Calu3 (cell line): ENCODE measurements at regions of chr2 and their contacts with region 1.

Region 1: DNA sequence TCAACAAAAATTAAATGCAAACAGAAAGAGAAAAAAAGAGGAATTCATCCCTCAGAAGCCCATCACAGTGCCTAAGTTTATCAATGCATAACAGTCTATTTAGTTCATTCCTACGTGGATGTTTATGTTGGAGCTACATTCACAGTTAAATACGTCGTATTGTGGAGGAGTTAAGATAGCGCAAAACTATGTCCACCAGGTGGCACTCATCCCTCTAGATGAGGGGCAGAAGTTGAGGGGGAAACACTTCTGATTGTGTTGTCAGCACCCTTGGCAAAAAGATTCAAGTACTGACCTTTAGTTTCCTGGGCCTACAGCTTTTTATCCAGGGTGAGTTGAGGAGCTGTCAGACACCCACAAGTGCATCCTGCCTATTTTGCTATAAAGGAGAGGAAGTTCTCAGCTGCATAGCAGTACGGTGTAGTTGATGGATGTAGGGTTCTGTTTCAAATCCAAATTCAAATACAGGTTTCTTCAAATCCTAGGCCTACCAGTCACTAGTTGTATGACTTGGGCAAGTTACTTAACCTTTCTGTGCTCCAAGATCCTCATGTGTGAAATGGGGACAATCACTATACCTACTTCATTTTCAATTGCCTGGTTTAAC is 26.8 kb upstream of the MYO1B start:
- DNase-seq: peak; percentile 68
- H3K4me3 Mint-ChIP-seq: no peak overlapping the region
- H3K27ac Mint-ChIP-seq: no peak overlapping the region
- H3K4me1 Mint-ChIP-seq: peaks cover 31% of the 10 kb centered on the region
- H3K27me3 Mint-ChIP-seq: no peaks in the 10 kb centered on the region
- CTCF ChIP-seq: peak; percentile 53

Region 2: GRCh38 chr2:191486584-191487320 is 268.4 kb after region 1 on chr2:
- CTCF ChIA-PET with region 1: no interaction called
- intact Hi-C with region 1: loop called (anchors 5 kb)
- DNase-seq: peak; percentile 32
- H3K4me3 Mint-ChIP-seq: no peak overlapping the region
- H3K27ac Mint-ChIP-seq: no peak overlapping the region
- H3K4me1 Mint-ChIP-seq: peaks cover 20% of the 10 kb centered on the region
- H3K27me3 Mint-ChIP-seq: no peaks in the 10 kb centered on the region
- CTCF ChIP-seq: no peak

Region 3: DNA sequence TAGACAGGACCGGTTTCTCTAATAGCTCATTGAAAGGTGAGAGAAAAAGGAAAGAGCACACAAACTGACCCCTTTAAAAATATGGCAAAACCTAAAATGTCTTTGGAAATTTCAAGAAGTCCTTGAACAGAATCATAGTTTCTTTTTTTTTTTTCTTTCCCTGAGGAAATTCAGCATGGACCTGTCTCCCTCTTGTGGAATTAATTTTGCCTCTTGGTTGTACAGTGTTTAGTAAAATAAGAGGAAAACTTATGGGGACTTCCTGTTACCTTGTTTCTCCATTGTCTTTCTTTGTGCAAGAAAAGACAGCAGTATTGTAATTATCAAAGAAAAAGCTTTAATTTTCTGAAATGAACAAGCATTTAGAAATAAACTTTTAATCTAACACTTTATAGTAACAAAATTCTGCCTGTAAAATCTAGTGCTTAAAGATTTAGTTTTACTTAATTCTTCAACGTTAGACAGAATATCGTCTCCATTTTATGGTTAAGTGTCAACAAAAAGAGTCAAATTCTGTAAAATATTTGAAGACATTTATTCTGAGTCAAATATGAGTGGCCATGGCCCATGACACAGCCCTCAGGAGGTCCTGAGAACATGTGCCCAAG is 283.3 kb after region 1 on chr2:
- CTCF ChIA-PET with region 1: interaction called, 4 read pairs
- intact Hi-C with region 1: loop called (anchors 2 kb)
- DNase-seq: no peak
- H3K4me3 Mint-ChIP-seq: no peak overlapping the region
- H3K27ac Mint-ChIP-seq: no peak overlapping the region
- H3K4me1 Mint-ChIP-seq: peaks cover 2% of the 10 kb centered on the region
- H3K27me3 Mint-ChIP-seq: no peaks in the 10 kb centered on the region
- CTCF ChIP-seq: peak; percentile 41

Region 4: DNA sequence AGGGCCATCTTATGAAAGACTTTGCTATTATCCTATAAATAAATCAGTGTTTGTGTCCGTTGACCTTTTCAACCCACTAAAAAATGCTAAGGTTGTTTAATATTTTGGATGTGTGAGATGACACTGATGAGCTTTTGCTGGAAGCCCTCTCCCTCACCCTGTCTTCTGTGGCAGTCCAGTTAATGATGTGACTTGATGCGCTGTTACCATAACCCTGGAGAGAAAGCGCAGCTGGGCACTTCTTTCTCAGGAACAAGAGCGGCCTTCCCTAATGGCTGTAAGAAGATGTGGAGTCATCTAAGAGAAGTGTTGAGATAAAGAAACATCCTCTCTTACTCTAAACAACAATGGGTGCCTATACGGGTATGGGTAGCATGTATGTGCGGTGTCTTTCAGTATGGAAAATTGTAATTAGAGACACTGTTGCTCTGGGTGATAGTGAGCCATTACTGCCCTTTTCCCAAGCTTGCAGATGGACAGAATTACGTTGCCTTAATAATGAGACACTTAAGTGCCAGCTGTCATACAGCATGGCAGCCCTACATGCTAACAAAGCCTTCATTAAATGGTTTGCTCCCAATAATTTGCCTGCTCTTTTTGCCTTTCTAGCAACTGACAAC is 293.9 kb after region 1 on chr2:
- CTCF ChIA-PET with region 1: no interaction called
- intact Hi-C with region 1: loop called (anchors 1 kb)
- DNase-seq: no peak
- H3K4me3 Mint-ChIP-seq: no peak overlapping the region
- H3K27ac Mint-ChIP-seq: no peak overlapping the region
- H3K4me1 Mint-ChIP-seq: peaks cover 7% of the 10 kb centered on the region
- H3K27me3 Mint-ChIP-seq: no peaks in the 10 kb centered on the region
- CTCF ChIP-seq: no peak

Region 5: DNA sequence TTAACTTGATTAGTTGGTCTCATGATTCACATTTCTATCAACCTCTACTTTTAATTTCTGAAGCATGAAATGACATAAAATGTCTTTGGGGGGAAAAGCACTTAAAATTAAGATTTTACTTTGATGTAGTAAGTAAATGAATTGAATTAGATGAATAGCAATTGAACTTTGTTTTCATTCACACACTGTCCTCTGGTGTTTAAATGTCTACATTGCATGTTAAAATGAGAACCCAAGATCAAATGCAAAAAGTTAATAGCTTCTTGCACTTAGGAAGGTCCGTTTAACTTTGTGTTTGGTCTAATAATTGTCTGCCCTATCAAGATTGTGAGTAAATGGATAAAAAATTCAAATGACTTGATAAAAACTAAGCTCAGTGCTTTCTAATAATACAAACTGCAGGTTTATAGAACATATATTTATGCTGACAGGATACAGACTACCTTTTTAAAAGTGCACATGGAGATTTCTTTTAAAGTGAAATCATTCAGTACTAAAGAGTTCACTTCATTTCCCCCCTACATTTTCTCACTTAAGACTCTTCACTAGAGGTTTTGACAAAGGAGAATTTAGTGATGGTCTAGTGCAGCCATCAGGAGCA is 303.3 kb after region 1 on chr2:
- CTCF ChIA-PET with region 1: no interaction called
- intact Hi-C with region 1: loop called (anchors 2 kb)
- DNase-seq: no peak
- H3K4me3 Mint-ChIP-seq: no peak overlapping the region
- H3K27ac Mint-ChIP-seq: no peak overlapping the region
- H3K4me1 Mint-ChIP-seq: no peaks in the 10 kb centered on the region
- H3K27me3 Mint-ChIP-seq: no peaks in the 10 kb centered on the region
- CTCF ChIP-seq: peak; percentile 78